ENCODE measurements at regions of chr17 and their contacts with region 1.

Region 1: DNA sequence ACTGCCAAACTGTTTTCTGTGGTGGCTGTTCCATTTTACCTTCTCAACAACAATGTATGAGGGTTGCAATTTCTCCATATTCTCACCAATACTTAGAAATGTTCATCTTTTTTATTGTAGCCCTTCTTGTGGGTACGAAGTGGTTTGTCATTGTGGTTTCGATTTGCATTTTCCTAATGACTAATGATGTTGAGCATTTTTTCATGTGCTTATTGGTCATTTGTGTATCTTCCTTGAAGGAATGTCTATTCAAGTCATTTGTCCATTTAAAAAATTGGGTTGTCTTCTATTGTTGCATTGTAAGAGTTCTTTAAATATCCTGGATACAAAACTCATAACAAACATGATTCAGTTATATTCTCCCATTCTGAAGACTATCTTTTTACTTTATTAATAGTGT is 47.5 kb upstream of the CCL2 start:
- DNase-seq: no peak
- H3K4me3 ChIP-seq: no peak overlapping the region
- CTCF ChIP-seq: no peak

Region 2: DNA sequence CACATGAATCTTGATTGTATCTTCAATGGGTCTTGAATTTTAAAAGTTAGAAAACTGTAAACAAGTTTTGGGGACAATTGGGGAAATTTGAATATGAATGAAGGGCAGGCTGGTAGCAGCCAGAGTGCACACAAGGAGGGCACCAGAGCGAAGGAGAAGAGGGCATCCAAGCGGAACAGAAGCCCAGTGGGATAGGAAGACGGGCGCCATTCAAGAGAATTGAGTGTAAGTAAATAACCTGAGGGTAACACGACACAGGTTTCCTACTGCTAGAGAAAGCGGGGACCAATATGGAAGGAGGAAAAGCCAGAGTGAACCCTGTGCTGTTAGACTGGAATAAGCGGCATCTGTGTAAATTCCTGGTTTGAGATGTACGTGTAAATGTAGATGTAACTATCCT is 67.6 kb before region 1 on chr17:
- in situ Hi-C with region 1: no loop called
- DNase-seq: no peak
- H3K4me3 ChIP-seq: no peak overlapping the region
- CTCF ChIP-seq: no peak

Region 3: DNA sequence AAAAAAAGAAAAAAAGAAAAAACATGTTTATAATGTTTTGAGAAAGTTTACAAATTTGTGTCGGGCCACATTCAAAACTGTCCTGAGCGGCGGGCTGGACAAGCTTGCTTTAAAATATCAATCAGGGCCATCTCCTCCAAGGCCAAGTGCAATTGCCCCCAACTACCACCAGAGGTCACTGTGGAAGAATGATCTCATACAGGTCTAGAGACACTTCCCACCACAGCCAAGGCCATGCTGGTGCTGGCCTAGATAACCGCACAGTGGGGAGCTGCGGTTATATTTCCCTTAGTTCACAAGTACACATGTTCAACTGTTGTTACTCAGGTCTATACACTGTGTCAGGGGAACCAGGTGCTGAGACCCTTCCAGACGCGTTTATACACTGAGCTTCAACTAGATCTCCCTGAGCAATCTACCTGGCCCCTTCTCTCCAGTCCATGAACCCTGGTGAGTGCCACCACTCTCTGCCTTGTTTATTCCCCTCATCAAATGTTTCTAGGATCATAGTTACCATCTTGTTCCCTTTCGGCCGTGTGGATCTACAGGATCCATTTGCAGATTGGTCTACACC is 36.2 kb before region 1 on chr17:
- in situ Hi-C with region 1: loop called (anchors 5 kb)
- DNase-seq: peak; percentile 27
- H3K4me3 ChIP-seq: no peak overlapping the region
- CTCF ChIP-seq: peak; percentile 92

Region 4: DNA sequence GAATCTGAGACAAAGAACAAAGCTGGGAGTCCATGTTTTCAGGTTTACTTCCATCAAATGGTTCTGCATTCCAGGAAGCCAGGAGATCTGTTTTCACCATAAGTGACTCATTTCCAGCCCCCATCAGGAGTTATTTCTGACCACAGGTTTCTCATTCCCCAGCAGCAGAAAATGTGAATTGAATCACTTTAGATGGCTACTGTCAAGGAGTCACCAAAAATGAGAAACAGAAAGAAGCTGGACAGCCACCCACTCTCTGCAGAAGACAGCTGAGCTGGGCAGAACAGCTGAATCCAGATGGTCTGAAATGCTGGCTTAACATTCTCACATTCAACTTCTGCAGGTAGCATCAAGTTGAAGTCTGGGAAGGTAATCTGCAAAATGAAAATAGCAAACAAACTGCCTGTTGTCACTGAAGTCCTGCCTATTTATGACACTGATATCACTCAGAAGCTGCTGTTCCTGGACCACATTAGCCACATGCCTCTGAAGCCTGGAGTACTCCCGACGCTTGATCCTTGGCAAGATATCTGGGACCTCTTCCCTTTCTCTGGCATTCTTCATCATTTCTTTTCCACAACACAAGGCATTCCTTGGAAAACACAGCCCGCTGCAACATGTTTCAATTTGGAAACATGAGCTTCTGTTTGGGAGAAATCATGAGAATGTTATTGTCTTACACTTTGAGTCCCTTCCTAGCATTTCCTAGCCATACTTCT is 93.2 kb after region 1 on chr17:
- in situ Hi-C with region 1: loop called (anchors 5 kb)
- DNase-seq: peak; percentile 60
- H3K4me3 ChIP-seq: no peak overlapping the region
- CTCF ChIP-seq: no peak

Region 5: DNA sequence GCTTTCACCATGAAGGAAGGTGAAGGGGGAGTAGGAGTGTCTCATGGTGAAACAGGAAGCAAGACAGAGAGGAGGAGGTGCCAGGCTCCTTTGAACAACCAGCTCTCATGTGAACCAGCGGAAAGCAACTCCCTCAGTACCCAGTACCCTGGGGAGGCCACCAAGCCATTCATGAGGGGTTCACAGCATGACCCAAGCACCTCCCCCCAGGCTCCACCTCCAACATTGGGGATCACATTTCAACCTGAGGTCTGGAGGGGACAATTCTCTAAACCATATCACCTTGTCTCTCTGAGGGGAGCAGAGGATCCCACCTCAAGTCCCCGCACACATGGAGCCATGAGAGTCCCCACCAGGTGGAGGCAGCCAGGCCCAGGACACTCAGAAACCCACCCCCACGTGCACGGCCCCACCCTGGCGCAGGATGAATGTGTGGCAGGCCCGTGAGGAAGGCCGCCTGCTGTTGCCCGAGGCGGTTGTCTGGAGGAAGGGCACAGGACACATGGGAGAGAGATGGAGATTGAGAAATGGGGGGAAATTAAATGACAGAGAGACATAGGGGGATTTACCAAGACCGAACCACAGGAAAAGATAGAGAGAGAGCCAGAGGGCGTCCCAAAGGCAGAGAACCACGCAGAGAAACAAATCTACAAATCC is 457.7 kb after region 1 on chr17:
- in situ Hi-C with region 1: no loop called
- DNase-seq: no peak
- H3K4me3 ChIP-seq: no peak overlapping the region
- CTCF ChIP-seq: no peak